Ascending aorta (tissue), 2 donors: ENCODE measurements at regions of chr1 and their contacts with region 1.

Region 1: GRCh38 chr1:205750138-205751035 is at the start of gene NUCKS1:
- DNase-seq: peak; percentile 98 to 100
- H3K4me3 ChIP-seq: peak within 1 kb of the TSS; percentile 88 to 92
- H3K27ac ChIP-seq: peak within 1 kb of the TSS; percentile 99
- H3K4me1 ChIP-seq: peaks cover 0 to 23% of the 10 kb centered on the region in 2 donors
- H3K27me3 ChIP-seq: no peaks in the 10 kb centered on the region
- CTCF ChIP-seq: peak in 1 of 3 experiments; percentile 29
- total RNA-seq, gene NUCKS1: 42.1 TPM

Region 2: GRCh38 chr1:205700865-205701401 is 49.5 kb before region 1 on chr1:
- intact Hi-C with region 1: no loop called
- DNase-seq: no peak
- H3K4me3 ChIP-seq: no peak overlapping the region
- H3K27ac ChIP-seq: no peak overlapping the region
- H3K4me1 ChIP-seq: no peaks in the 10 kb centered on the region
- H3K27me3 ChIP-seq: no peaks in the 10 kb centered on the region
- CTCF ChIP-seq: no peak

Region 3: DNA sequence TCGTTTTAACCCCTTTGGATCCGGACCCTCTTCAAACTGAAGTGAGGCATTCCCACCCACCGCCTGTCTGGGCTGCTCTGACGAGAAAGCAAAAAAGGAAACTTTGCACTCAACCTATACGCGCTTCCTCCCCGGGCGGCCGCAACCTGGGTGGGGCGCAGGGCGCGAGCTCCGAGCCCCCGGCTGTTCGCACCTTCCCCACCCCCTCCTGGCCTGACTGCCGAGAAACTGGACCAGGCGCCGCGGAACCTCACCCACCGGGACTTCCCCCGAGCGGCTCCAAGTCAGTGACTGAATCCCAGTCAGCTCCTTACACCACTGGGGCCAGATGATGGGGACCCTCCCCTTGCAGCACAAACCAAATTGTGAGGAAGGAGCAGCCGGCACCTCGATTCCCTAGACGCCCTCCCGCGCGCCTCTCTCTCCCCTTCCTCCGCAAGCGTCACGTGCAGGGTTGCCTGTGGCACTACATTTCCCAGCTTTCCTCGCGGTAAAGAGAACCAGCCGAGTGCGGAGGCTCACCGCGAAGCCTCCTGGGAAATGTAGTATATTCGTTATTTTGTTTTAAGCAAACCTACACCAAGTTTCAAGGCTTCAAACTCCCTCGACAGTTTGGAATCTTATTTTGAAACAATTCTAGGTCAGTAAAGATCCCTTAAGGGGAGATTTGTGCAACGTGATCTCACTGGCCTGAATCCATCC is 24.8 kb after region 1 on chr1 and contains the start of gene RAB29:
- intact Hi-C with region 1: loop called (anchors 1 kb)
- DNase-seq: peak; percentile 58 to 93
- H3K4me3 ChIP-seq: peak within 1 kb of the TSS; percentile 77 to 93
- H3K27ac ChIP-seq: peak within 1 kb of the TSS; percentile 82 to 90
- H3K4me1 ChIP-seq: peaks cover 5 to 11% of the 10 kb centered on the region in 2 donors
- H3K27me3 ChIP-seq: no peaks in the 10 kb centered on the region
- CTCF ChIP-seq: no peak
- total RNA-seq, gene RAB29: 18.0 TPM